Astrocyte of the spinal cord (primary cell): ENCODE measurements at regions of chr18 and their contacts with region 1.

Region 1: DNA sequence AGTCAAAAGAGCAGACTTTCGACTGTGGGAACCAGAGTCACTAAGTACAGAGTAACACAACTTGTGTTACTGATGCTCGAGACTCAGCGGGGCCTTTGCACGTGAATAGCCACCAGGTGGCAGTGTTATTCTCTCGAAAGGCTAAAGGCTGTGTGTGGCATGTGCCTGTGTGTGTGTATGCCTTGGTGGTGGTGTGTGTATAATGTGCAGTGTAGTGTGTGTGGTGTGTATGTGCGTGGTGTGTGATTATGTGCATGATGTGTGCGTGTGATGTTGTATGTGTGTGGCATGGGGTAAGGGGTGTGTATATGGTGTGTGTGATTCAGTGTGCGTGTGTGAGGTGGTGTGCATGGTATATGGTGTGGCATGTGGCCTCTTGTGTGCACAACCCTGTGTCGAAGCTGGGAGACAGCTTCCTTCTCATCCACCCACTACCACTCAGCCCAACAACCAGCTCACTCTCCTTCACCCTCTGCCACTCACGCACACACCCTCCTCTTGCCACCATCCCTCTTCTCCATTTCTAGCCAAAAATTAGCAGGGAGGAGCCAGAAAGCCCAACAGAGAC is 83.0 kb upstream of the ZNF532 start:
- DNase-seq: peak; percentile 84
- H3K4me3 ChIP-seq: no peak overlapping the region
- CTCF ChIP-seq: peak; percentile 83

Region 2: DNA sequence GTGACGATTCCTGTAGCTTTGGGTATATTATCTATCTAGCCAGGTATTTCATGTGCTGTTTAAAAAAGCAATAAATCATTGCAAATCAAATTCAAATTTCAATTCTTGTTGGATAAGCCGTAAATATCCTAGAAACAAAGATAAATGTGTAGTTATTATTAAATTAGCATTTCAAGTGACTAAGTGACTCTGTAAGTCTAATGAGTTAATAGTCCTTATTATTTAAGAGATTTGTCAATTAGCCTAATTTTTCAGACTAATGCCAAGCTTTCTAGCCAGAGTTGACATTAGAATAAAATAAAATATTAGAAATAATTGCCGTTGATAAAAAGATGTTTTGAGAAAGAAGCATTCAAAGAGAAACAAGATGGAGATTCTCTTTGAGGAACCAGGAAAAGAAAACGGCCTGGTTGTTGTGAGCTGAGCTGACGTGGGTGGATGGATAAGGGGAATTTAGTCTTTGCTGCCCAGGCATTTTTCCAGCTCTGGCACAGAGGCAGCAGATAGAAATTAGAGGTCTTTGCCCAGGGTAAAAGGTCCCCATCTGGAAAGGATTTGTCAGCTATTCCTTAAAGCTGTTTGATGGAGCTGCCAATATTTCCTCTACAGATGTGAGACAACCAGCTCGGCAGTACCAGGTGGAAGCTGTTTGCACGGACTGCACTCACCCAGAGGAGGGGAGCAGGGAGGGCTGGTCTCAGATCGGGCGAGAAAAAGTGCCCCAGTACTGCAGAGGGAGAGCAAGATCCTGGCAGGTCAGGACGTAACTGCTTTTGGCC is 240.6 kb after region 1 on chr18:
- in situ Hi-C with region 1: no loop called
- DNase-seq: no peak
- H3K4me3 ChIP-seq: no peak overlapping the region
- CTCF ChIP-seq: no peak

Region 3: GRCh38 chr18:59070181-59070912 is 288.6 kb after region 1 on chr18:
- in situ Hi-C with region 1: loop called (anchors 25 kb)
- DNase-seq: peak; percentile 73
- H3K4me3 ChIP-seq: no peak overlapping the region
- CTCF ChIP-seq: peak; percentile 90